Naive thymus-derived CD4-positive, alpha-beta T cell (primary cell): ENCODE measurements at regions of chr3 and their contacts with region 1.

Region 1: DNA sequence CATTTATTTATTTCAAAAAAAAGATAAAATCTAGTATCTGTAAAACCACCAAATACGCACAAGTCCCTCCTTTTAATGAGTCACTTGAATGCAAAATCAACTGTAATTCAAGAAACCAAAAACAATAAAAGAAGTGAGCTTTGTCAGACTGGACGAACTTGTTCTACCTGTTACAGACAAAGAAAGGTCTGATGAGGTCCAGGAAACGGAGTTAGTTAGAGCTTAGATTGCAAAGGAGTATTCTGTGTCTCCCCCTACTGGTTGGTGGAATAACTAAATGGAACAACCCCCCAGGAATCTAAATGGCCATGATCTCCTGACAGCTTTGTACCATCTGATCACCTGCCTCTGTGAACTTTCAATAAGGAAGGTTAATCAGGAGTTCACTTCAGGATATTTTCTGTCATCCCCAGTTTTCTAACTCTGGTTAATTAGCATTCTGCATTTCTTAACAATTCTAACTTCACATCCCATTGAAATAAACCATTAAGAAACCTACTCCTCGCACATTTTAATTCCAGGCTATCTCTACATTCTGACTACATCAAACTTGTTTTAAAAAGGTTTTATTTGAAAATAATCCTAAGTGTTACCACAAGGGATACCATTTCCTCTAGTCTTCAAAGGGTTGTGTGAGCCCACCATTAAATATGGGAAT is 333.0 kb upstream of the SATB1 start:
- DNase-seq: peak in 7 of 9 donors; percentile 69 to 85 (median 79)
- ATAC-seq: peak; percentile 98
- H3K4me3 ChIP-seq: no peak overlapping the region
- H3K4me3 Mint-ChIP-seq: peak overlapping the region in 6 of 10 donors; percentile 2 to 45 (median 12)
- H3K27ac ChIP-seq: peak overlapping the region; percentile 15
- H3K27ac Mint-ChIP-seq: peak overlapping the region in 8 of 9 donors; percentile 61 to 88 (median 74)
- H3K4me1 ChIP-seq: peaks cover 4 to 29% of the 10 kb centered on the region in 2 donors
- H3K4me1 Mint-ChIP-seq: peaks cover 17 to 55% (median 45%) of the 10 kb centered on the region in 7 donors
- H3K27me3 ChIP-seq: no peaks in the 10 kb centered on the region
- H3K27me3 Mint-ChIP-seq: no peaks in the 10 kb centered on the region

Region 2: GRCh38 chr3:17670749-17671148 is 1087.4 kb before region 1 on chr3:
- CTCF ChIA-PET with region 1: no interaction called
- POLR2A ChIA-PET with region 1: no interaction called
- intact Hi-C with region 1: no loop called
- DNase-seq: no peak
- ATAC-seq: no peak
- H3K4me3 ChIP-seq: no peak overlapping the region
- H3K4me3 Mint-ChIP-seq: no peak overlapping the region
- H3K27ac ChIP-seq: no peak overlapping the region
- H3K27ac Mint-ChIP-seq: no peak overlapping the region
- H3K4me1 ChIP-seq: no peaks in the 10 kb centered on the region
- H3K4me1 Mint-ChIP-seq: peaks cover 0 to 12% (median under 1%) of the 10 kb centered on the region in 7 donors
- H3K27me3 ChIP-seq: no peaks in the 10 kb centered on the region
- H3K27me3 Mint-ChIP-seq: no peaks in the 10 kb centered on the region

Region 3: GRCh38 chr3:18424729-18425640 is 333.2 kb before region 1 on chr3 and contains the start of gene SATB1:
- CTCF ChIA-PET with region 1: interaction called, 10 read pairs
- POLR2A ChIA-PET with region 1: interaction called, 3 read pairs
- intact Hi-C with region 1: loop called in 1 of 2 experiments (anchors 2 kb)
- DNase-seq: peak; percentile 55 to 72 (median 67)
- ATAC-seq: peak; percentile 62
- H3K4me3 ChIP-seq: peak within 1 kb of the TSS; percentile 72
- H3K4me3 Mint-ChIP-seq: peak within 1 kb of the TSS; percentile 91 to 100 (median 98)
- H3K27ac ChIP-seq: peak within 1 kb of the TSS; percentile 97
- H3K27ac Mint-ChIP-seq: peak within 1 kb of the TSS; percentile 87 to 99 (median 98)
- H3K4me1 ChIP-seq: peaks cover 8 to 21% of the 10 kb centered on the region in 2 donors
- H3K4me1 Mint-ChIP-seq: peaks cover 41 to 72% (median 62%) of the 10 kb centered on the region in 7 donors
- H3K27me3 ChIP-seq: no peaks in the 10 kb centered on the region
- H3K27me3 Mint-ChIP-seq: peaks cover 0 to 2% (median 0%) of the 10 kb centered on the region in 5 donors
- total RNA-seq, gene SATB1: 258 to 482 (median 451) TPM

Region 4: GRCh38 chr3:18559331-18559842 is 198.8 kb before region 1 on chr3:
- CTCF ChIA-PET with region 1: interaction called, 54 read pairs
- POLR2A ChIA-PET with region 1: interaction called, 14 read pairs
- intact Hi-C with region 1: loop called (anchors 1 kb)
- DNase-seq: peak; percentile 9 to 57 (median 32)
- ATAC-seq: peak; percentile 77
- H3K4me3 ChIP-seq: no peak overlapping the region
- H3K4me3 Mint-ChIP-seq: peak overlapping the region; percentile 40 to 79 (median 67)
- H3K27ac ChIP-seq: no peak overlapping the region
- H3K27ac Mint-ChIP-seq: peak overlapping the region; percentile 63 to 89 (median 79)
- H3K4me1 ChIP-seq: peaks cover 13 to 19% of the 10 kb centered on the region in 2 donors
- H3K4me1 Mint-ChIP-seq: peaks cover 22 to 67% (median 61%) of the 10 kb centered on the region in 7 donors
- H3K27me3 ChIP-seq: no peaks in the 10 kb centered on the region
- H3K27me3 Mint-ChIP-seq: no peaks in the 10 kb centered on the region

Region 5: DNA sequence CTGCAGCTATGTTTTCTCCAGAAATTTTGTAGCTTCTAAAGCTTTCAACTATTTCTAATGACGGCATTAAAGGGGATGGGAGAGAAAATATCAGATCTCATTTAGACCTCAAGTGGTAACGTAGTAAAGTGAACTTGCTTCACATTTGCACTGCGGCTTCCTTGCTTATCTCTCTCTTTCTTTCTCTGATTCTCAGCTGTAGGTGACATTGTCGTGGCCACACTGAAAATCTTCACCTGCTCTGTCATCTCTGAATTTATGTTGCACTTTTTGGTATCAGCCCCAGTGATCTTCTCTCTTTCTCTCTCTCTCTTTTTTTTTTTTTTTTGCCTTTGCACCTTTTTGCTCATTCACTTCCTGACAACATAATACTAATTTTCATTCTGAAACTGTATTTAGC is 78.9 kb before region 1 on chr3:
- CTCF ChIA-PET with region 1: interaction called, 6 read pairs
- POLR2A ChIA-PET with region 1: interaction called, 3 read pairs
- intact Hi-C with region 1: loop called (anchors 1 kb)
- DNase-seq: peak in 8 of 9 donors; percentile 26 to 65 (median 42)
- ATAC-seq: peak; percentile 91
- H3K4me3 ChIP-seq: no peak overlapping the region
- H3K4me3 Mint-ChIP-seq: peak overlapping the region; percentile 30 to 79 (median 72)
- H3K27ac ChIP-seq: peak overlapping the region; percentile 35
- H3K27ac Mint-ChIP-seq: peak overlapping the region; percentile 53 to 90 (median 80)
- H3K4me1 ChIP-seq: peaks cover 34 to 46% of the 10 kb centered on the region in 2 donors
- H3K4me1 Mint-ChIP-seq: peaks cover 37 to 83% (median 75%) of the 10 kb centered on the region in 7 donors
- H3K27me3 ChIP-seq: no peaks in the 10 kb centered on the region
- H3K27me3 Mint-ChIP-seq: no peaks in the 10 kb centered on the region

Region 6: GRCh38 chr3:18740631-18741583 is 17.3 kb before region 1 on chr3:
- CTCF ChIA-PET with region 1: interaction called, 6 read pairs
- POLR2A ChIA-PET with region 1: interaction called, 9 read pairs
- intact Hi-C with region 1: loop called (anchors 1 kb)
- DNase-seq: peak in 8 of 9 donors; percentile 46 to 83 (median 70)
- ATAC-seq: peak; percentile 74
- H3K4me3 ChIP-seq: peak overlapping the region; percentile 28
- H3K4me3 Mint-ChIP-seq: peak overlapping the region; percentile 74 to 89 (median 84)
- H3K27ac ChIP-seq: peak overlapping the region; percentile 80
- H3K27ac Mint-ChIP-seq: peak overlapping the region; percentile 89 to 99 (median 96)
- H3K4me1 ChIP-seq: peaks cover 65 to 71% of the 10 kb centered on the region in 2 donors
- H3K4me1 Mint-ChIP-seq: peaks cover 52 to 97% (median 92%) of the 10 kb centered on the region in 7 donors
- H3K27me3 ChIP-seq: no peaks in the 10 kb centered on the region
- H3K27me3 Mint-ChIP-seq: no peaks in the 10 kb centered on the region

Region 7: DNA sequence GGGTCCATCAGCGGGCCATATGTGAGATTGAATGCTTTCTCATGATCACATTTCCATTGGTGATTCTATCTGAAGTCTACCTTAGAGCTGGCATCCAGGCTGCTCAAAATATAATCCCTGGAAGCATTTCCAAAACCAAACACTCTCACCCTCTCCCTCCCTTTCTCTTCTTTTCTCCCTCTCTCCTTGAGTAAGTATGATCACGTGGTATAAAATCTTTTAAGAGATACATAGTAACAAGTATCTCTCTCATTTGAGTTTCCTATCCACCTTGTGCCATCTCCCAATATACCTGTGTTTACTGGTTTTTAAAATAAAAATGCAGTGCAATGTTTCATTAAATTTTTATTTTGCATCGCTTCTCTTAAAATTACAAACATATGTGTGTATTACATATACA is 39.2 kb after region 1 on chr3:
- CTCF ChIA-PET with region 1: no interaction called
- POLR2A ChIA-PET with region 1: no interaction called
- intact Hi-C with region 1: no loop called
- DNase-seq: no peak
- ATAC-seq: no peak
- H3K4me3 ChIP-seq: no peak overlapping the region
- H3K4me3 Mint-ChIP-seq: no peak overlapping the region
- H3K27ac ChIP-seq: no peak overlapping the region
- H3K27ac Mint-ChIP-seq: no peak overlapping the region
- H3K4me1 ChIP-seq: no peaks in the 10 kb centered on the region
- H3K4me1 Mint-ChIP-seq: peaks cover 0 to 14% (median 0%) of the 10 kb centered on the region in 7 donors
- H3K27me3 ChIP-seq: no peaks in the 10 kb centered on the region
- H3K27me3 Mint-ChIP-seq: peaks cover 0 to 3% (median 0%) of the 10 kb centered on the region in 5 donors

Region 8: GRCh38 chr3:18988614-18989229 is 230.5 kb after region 1 on chr3:
- CTCF ChIA-PET with region 1: interaction called, 3 read pairs
- POLR2A ChIA-PET with region 1: interaction called, 3 read pairs
- intact Hi-C with region 1: loop called in 1 of 2 experiments (anchors 1 kb)
- DNase-seq: peak in 7 of 9 donors; percentile 32 to 69 (median 51)
- ATAC-seq: peak; percentile 72
- H3K4me3 ChIP-seq: no peak overlapping the region
- H3K4me3 Mint-ChIP-seq: peak overlapping the region in 9 of 10 donors; percentile 65 to 91 (median 77)
- H3K27ac ChIP-seq: no peak overlapping the region
- H3K27ac Mint-ChIP-seq: peak overlapping the region in 6 of 9 donors; percentile 21 to 71 (median 50)
- H3K4me1 ChIP-seq: peaks cover 0 to 7% of the 10 kb centered on the region in 2 donors
- H3K4me1 Mint-ChIP-seq: peaks cover 2 to 31% (median 24%) of the 10 kb centered on the region in 7 donors
- H3K27me3 ChIP-seq: no peaks in the 10 kb centered on the region
- H3K27me3 Mint-ChIP-seq: peaks cover 20 to 31% (median 22%) of the 10 kb centered on the region in 5 donors